Head of caudate nucleus (tissue), 42 donors: ENCODE measurements at regions of chr2 and their contacts with region 1.

Region 1: DNA sequence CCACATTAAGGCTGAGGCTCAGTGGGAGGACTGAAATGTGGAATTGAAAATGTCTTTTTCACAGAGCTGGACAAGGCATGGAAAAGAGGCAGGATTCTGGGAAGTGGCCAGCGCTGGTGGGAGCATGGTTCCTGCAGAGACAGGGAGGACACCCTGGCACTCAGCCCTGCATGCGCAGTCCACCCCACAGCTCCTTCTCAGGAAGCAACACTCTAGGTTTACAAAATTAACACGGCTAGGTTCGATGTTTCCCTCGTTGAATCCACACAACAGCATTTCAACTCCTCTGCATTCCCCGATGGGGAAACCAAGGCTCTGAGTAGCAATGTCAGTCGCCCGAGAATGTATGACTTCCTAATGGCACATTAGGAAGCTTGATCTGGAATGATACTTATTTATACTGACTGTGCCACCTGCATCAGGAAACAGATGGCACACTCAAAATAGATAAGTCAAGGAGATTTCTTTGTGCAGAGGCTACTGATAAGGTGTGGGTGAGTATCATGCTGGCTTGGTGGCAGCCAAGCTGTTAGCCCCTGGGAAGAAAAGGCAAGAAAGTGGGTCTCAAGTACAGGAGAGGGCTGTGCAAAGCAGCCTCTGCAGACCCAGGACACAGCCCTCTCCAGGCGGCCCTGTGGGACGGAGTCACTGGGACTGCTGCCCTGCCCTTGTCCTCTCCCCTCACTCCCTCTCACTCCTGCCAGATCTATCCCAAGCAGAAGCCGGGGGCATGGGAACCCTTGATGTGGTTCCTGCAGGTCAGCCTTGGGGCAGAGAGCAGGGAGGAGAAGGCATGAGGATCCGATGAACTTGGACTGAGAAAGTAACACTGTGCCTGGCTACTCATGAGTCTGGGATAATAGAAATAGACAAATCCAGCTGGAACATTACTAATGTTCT is 158.4 kb upstream of the FHL2 start:
- DNase-seq: no peak

Region 2: GRCh38 chr2:105438104-105438929 is 119.0 kb before region 1 on chr2:
- intact Hi-C with region 1: no loop called
- DNase-seq: peak in 1 of 42 donors; percentile 8

Region 3: DNA sequence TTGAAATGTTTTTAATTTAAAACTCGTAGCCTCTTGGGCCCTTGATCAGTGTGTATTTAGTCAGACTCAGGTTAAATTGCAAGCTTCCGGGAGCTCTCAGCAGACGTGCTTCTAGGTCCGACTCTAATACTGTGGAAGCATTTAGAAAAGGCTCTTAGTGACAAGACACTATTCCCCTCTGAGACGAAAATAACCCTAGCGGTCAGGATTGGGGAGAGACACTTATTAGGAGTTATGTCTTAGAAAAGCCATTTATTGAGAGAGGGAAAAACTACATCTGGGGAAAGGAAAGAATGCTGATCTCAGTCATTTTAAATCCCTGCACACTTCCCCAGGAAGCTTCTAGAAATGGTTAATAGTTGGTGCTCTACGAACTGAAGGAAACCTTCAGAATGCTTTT is 76.9 kb after region 1 on chr2:
- intact Hi-C with region 1: no loop called
- DNase-seq: peak in 2 of 42 donors; percentile 10

Region 4: GRCh38 chr2:105858868-105859693 is 301.8 kb after region 1 on chr2:
- intact Hi-C with region 1: no loop called
- DNase-seq: peak in 6 of 42 donors; percentile 11 to 52 (median 40)

Region 5: GRCh38 chr2:105929516-105929915 is 372.2 kb after region 1 on chr2:
- intact Hi-C with region 1: no loop called
- DNase-seq: no peak

Region 6: GRCh38 chr2:105950521-105951383 is 393.5 kb after region 1 on chr2:
- intact Hi-C with region 1: loop called (anchors 5 kb)
- DNase-seq: peak in 39 of 42 donors; percentile 4 to 69 (median 32)